Activated CD4-positive, alpha-beta memory T cell treated with anti-CD3 and anti-CD28 coated beads for 36 hours (primary cell): ENCODE measurements at regions of chr1 and their contacts with region 1.

Region 1: DNA sequence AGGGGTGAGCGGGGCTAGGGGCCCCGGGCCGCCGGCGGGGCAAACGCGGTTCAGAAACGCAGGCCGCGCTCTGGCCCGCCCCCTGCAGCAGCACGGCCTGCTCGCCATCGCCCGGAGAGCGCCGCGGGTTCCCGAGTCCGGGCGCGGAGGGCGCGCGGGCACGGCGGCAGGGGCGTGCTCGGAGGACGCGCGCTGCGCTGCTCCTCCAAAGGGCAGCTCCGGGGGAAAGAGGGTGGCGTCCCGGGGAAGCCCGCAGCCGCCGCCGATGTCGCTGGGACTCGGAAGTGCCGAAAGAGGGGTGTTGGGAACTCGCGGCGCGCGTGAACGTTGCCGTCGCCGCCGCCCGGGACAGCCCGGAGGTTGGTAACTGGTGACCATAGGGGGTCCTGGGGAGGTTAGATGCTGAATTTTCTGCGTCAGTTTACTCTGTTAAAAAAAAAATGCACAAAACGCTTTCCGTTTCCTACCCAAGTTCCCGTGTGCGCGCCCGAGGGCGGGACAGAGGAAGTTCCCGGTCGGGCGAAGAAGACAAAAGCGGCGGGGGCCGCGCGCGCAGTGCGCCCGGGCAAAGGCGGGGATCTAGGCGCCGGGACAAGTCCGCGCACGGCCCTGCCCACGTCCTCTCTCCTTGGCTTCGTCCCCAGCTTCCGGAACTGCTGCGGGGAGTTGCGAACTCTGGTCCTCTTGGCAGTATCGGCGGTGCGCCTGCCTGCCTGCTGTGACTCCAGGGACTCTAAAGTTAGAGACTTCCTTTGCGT is at the start of gene HHAT:
- DNase-seq: peak; percentile 76
- H3K4me3 Mint-ChIP-seq: peak within 1 kb of the TSS; percentile 89
- H3K27ac Mint-ChIP-seq: peak within 1 kb of the TSS; percentile 91
- H3K4me1 Mint-ChIP-seq: peaks cover 42% of the 10 kb centered on the region
- H3K27me3 Mint-ChIP-seq: peaks cover 5% of the 10 kb centered on the region
- total RNA-seq, gene HHAT: 1.6 to 1.8 TPM

Region 2: GRCh38 chr1:210024996-210025395 is 303.9 kb before region 1 on chr1:
- CTCF ChIA-PET with region 1: no interaction called
- POLR2A ChIA-PET with region 1: no interaction called
- intact Hi-C with region 1: no loop called
- DNase-seq: no peak
- H3K4me3 Mint-ChIP-seq: no peak overlapping the region
- H3K27ac Mint-ChIP-seq: no peak overlapping the region
- H3K4me1 Mint-ChIP-seq: no peaks in the 10 kb centered on the region
- H3K27me3 Mint-ChIP-seq: peaks cover 3% of the 10 kb centered on the region

Region 3: GRCh38 chr1:210214573-210215409 is 114.1 kb before region 1 on chr1:
- CTCF ChIA-PET with region 1: no interaction called
- POLR2A ChIA-PET with region 1: no interaction called
- intact Hi-C with region 1: no loop called
- DNase-seq: no peak
- H3K4me3 Mint-ChIP-seq: no peak overlapping the region
- H3K27ac Mint-ChIP-seq: no peak overlapping the region
- H3K4me1 Mint-ChIP-seq: no peaks in the 10 kb centered on the region
- H3K27me3 Mint-ChIP-seq: peaks cover 6% of the 10 kb centered on the region

Region 4: DNA sequence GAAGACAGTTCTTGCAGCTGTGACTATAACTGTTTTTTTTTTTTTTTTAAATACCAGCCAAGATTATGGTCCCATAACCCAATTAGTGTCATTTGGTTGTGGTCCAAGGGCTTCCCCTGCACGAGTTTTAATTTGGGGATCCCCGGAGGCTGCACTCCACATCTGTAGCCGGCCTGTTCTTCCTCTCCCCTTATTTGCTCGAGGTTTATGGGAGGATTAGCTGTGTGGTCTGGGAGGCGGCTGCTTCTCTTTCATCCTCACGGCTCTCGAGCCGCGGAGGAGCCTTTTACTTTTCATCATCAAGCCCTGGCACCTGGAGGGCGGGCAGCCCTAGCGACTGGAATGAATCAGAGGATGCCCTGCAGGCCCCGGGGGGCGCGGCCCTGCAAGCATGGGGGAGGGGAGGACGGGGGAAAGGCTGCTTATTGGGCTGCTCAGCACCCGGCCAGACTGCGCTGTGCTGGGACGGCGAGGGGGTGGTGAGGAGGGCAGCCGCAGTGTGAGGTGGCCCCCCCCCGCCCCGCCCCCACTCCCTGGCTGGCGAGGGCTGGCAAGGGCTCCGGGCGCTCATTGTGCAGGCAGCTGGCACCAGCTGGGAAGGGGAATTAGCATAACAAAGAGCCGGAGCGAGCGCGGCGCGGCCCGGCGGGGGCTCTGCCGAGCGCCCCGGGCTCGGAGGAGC is 77.8 kb before region 1 on chr1:
- CTCF ChIA-PET with region 1: interaction called, 3 read pairs
- POLR2A ChIA-PET with region 1: no interaction called
- intact Hi-C with region 1: loop called (anchors 5 kb)
- DNase-seq: peak; percentile 50
- H3K4me3 Mint-ChIP-seq: peak overlapping the region; percentile 38
- H3K27ac Mint-ChIP-seq: no peak overlapping the region
- H3K4me1 Mint-ChIP-seq: peaks cover 23% of the 10 kb centered on the region
- H3K27me3 Mint-ChIP-seq: peaks cover 66% of the 10 kb centered on the region

Region 5: GRCh38 chr1:210291786-210292230 is 37.1 kb before region 1 on chr1:
- CTCF ChIA-PET with region 1: no interaction called
- POLR2A ChIA-PET with region 1: no interaction called
- intact Hi-C with region 1: no loop called
- DNase-seq: no peak
- H3K4me3 Mint-ChIP-seq: no peak overlapping the region
- H3K27ac Mint-ChIP-seq: no peak overlapping the region
- H3K4me1 Mint-ChIP-seq: peaks cover 5% of the 10 kb centered on the region
- H3K27me3 Mint-ChIP-seq: peaks cover 41% of the 10 kb centered on the region

Region 6: DNA sequence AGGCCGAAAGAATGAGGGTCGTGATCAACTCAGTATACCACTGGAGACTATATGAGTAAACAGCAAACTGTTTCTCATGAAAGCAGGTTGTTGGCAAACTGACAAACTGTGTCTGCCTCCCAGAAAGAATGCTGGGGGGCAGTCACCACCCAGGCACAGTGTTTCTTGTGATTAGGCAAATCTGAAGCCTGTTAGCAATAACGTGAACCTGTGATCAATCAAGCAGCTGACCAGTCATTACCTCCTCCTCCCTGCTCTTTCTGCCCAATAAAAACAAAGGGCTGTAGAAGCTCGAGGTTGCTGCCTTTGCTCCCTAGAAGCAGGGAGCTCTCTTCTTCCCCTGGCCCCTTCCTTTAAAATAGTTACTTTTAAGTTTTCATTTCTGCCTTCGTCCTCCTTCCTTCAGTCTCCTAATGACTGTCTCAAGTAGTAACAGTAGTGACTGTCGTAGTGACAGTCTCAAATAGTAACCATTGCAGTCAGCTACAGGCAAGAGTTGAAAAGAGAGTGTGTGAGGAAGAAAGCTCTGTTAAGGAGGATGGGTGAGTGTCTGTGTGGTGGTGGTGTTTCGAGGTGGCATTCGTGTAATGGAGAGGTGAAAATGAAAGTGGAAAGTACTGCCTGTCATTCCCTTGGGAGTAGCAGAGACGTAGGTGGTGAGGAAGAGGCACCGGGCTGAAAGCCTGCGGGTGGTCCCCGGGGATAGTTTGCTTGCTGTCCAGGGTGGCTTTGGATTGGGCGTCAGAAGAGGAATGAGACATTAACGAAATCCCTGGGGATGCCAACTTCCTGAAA is 14.3 kb after region 1 on chr1:
- CTCF ChIA-PET with region 1: interaction called, 32 read pairs
- POLR2A ChIA-PET with region 1: interaction called, 27 read pairs
- intact Hi-C with region 1: loop called (anchors 1 kb)
- DNase-seq: no peak
- H3K4me3 Mint-ChIP-seq: no peak overlapping the region
- H3K27ac Mint-ChIP-seq: no peak overlapping the region
- H3K4me1 Mint-ChIP-seq: peaks cover 36% of the 10 kb centered on the region
- H3K27me3 Mint-ChIP-seq: no peaks in the 10 kb centered on the region

Region 7: GRCh38 chr1:210464519-210465039 is 135.7 kb after region 1 on chr1:
- CTCF ChIA-PET with region 1: no interaction called
- POLR2A ChIA-PET with region 1: no interaction called
- intact Hi-C with region 1: loop called (anchors 1 kb)
- DNase-seq: peak; percentile 44
- H3K4me3 Mint-ChIP-seq: no peak overlapping the region
- H3K27ac Mint-ChIP-seq: no peak overlapping the region
- H3K4me1 Mint-ChIP-seq: peaks cover 24% of the 10 kb centered on the region
- H3K27me3 Mint-ChIP-seq: peaks cover 2% of the 10 kb centered on the region

Region 8: GRCh38 chr1:210477381-210477783 is 148.5 kb after region 1 on chr1:
- CTCF ChIA-PET with region 1: no interaction called
- POLR2A ChIA-PET with region 1: no interaction called
- intact Hi-C with region 1: no loop called
- DNase-seq: no peak
- H3K4me3 Mint-ChIP-seq: no peak overlapping the region
- H3K27ac Mint-ChIP-seq: no peak overlapping the region
- H3K4me1 Mint-ChIP-seq: no peaks in the 10 kb centered on the region
- H3K27me3 Mint-ChIP-seq: no peaks in the 10 kb centered on the region